K562 (cell line): ENCODE measurements at regions of chr11 and their contacts with region 1.

Region 1: DNA sequence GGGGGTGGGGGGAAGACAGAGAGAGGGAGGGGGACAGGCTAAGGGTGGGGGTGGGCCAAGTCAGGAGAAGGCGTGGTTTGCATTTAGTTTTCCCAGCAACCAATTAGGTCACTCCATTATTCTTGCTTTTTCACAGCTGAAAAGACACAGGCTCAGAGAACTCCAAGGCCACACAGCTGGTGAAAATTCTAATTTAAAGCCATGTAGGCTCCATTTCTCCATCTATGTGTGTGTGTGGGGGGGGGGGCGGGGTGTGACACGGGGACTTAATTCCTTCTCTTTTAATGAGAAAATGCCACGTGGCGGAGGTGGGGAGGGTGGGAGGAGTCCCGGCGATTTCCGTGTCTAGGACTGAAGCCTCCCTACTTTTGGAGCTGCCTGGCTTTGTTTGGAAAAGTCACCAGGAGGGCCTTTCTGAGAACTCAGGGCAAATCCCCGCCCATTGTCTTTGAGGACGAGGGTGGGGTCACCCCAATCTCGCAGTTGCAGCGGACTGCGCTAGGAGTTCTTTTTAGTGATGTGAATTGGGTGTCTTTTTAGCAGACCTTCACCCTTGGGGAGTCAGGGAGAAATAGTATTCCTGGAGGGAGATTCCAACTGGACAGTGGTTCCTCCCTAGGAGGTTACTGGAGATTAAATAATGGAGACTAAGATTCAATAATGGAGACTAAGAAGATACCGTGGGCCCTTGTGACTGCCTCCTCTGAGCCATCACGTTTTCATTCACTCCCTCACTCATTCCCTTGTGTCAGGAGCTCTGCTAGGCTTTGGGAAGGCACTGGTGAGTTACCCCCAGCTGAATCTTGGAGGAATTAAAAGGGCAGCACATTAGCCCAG is 36.4 kb upstream of the PTPRJ start:
- DNase-seq: peak; percentile 74 to 95 (median 83)
- ATAC-seq: peak; percentile 68
- H3K4me3 ChIP-seq: peak overlapping the region; percentile 16; the same call in 1 of the 2 replicates
- H3K27ac ChIP-seq: peak overlapping the region; percentile 90
- H3K4me1 ChIP-seq: peaks cover 45 to 61% of the 10 kb centered on the region in 2 experiments
- H3K27me3 ChIP-seq: no peaks in the 10 kb centered on the region
- CTCF ChIP-seq: no peak
- EP300 ChIP-seq: peak; percentile 54
- POLR2A ChIP-seq: peak; percentile 72
- RAD21 ChIP-seq: no peak

Region 2: GRCh38 chr11:47620836-47621378 is 323.0 kb before region 1 on chr11:
- CTCF ChIA-PET with region 1: no interaction called
- POLR2A ChIA-PET with region 1: no interaction called
- in situ Hi-C with region 1: no loop called
- intact Hi-C with region 1: no loop called
- DNase-seq: no peak
- ATAC-seq: no peak
- H3K4me3 ChIP-seq: no peak overlapping the region
- H3K27ac ChIP-seq: no peak overlapping the region
- H3K4me1 ChIP-seq: no peaks in the 10 kb centered on the region
- H3K27me3 ChIP-seq: no peaks in the 10 kb centered on the region
- CTCF ChIP-seq: no peak
- EP300 ChIP-seq: no peak
- POLR2A ChIP-seq: no peak
- RAD21 ChIP-seq: no peak

Region 3: DNA sequence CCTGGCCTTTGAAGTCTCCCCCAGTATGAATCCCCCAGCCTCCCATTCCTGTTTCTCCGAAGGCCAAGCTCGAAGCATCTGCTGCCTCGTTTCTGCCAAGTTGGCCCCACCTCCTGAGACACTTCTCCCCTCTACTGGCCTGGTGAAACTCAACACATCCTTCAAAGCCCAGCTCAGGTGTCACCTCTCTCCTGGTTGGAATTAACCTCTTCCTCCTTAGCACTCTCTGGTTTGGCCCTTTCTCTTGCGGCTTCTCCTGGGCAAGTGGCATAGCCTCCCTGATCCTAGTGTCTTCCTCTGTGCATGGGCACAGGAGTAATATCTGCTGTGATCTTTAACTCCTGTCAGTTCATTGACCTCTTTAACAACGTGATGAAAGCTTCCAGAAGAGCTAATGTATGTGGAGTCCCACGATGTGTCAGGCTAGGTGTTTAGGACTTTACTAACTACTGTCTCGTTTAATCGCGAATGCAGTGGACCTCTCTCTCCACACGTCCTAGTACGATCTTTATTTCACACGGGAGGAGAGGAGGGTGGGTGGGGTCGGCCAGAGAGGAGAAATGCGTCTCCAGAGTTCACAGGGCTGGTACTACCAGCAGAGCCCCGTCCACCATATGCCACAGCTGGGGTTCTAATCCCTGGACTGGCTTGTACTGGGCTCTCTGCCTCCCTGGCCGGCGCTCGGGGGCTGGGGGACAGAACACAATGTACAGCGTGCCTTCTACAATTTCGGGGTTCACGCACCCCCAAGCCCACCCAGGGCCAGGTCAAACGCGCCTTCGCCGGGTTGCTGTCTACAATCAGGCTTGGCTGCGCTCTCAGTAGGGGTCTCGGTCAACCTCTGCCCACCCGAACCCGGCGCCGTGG is 35.7 kb after region 1 on chr11:
- CTCF ChIA-PET with region 1: no interaction called
- POLR2A ChIA-PET with region 1: interaction called, 7 read pairs
- in situ Hi-C with region 1: no loop called
- intact Hi-C with region 1: loop called (anchors 2 kb)
- DNase-seq: no peak
- ATAC-seq: peak; percentile 5
- H3K4me3 ChIP-seq: peak overlapping the region; percentile 61
- H3K27ac ChIP-seq: no peak overlapping the region
- H3K4me1 ChIP-seq: peaks cover 26 to 28% of the 10 kb centered on the region in 2 experiments
- H3K27me3 ChIP-seq: peaks cover 0 to 2% of the 10 kb centered on the region in 2 experiments; a peak in 1 of 5 replicates
- CTCF ChIP-seq: 0 out of 6 replicates have a peak, but pooled peaks of 2 of the 3 experiments have one; percentile 20 to 23
- EP300 ChIP-seq: no peak
- POLR2A ChIP-seq: no peak
- RAD21 ChIP-seq: no peak; a peak in 1 of 4 replicates

Region 4: DNA sequence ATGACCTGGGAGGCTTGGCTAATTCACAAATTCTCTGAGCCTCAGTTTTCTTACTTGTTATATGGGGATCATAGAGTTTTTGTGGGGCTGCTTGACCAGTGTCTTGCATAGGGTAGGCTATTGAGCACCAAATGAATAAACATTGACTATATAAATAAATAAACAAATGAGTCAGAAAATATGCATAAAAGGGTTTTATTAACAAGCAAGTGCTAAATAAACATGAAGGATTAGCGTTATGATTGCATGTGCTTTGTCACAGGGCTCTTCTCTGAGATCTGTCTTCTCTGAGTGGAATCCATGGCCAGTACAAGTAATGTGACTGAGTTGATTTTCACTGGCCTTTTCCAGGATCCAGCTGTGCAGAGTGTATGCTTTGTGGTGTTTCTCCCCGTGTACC is 272.6 kb after region 1 on chr11 and contains the start of gene OR4B1:
- CTCF ChIA-PET with region 1: no interaction called
- POLR2A ChIA-PET with region 1: no interaction called
- in situ Hi-C with region 1: no loop called
- intact Hi-C with region 1: no loop called
- DNase-seq: no peak
- ATAC-seq: no peak
- H3K4me3 ChIP-seq: no peak within 1 kb of the TSS
- H3K27ac ChIP-seq: no peak within 1 kb of the TSS
- H3K4me1 ChIP-seq: no peaks in the 10 kb centered on the region
- H3K27me3 ChIP-seq: no peaks in the 10 kb centered on the region
- CTCF ChIP-seq: no peak
- EP300 ChIP-seq: no peak
- POLR2A ChIP-seq: no peak
- RAD21 ChIP-seq: no peak
- polyA plus RNA-seq, gene OR4B1: not detected